A549 (cell line): ENCODE measurements at regions of chr3 and their contacts with region 1.

Region 1: GRCh38 chr3:25768851-25769250 is 14.4 kb downstream of the NGLY1 start:
- DNase-seq: no peak
- ATAC-seq: no peak
- H3K4me3 ChIP-seq: no peak overlapping the region
- H3K27ac ChIP-seq: no peak overlapping the region
- H3K4me1 ChIP-seq: no peaks in the 10 kb centered on the region
- CTCF ChIP-seq: no peak
- EP300 ChIP-seq: no peak
- POLR2A ChIP-seq: no peak
- RAD21 ChIP-seq: no peak

Region 2: DNA sequence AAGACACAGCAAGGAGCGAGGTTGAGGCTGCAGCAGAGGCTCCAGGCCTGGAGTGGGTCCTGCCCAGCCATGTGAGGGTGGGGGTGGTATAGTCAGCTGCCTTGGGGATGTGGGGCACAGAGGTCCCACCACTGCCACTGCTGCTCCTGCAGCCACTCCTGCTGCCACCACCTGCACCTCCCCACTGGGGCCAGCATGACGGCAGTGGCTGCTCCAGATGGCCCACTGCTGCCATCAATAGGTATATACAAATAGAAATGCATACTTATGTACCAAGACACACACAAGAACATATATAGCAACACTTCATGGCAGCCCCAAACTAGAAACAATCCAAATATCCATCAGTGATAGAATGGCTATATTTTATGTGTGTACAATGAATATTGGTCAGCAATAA is 94.2 kb before region 1 on chr3:
- CTCF ChIA-PET with region 1: no interaction called
- POLR2A ChIA-PET with region 1: no interaction called
- DNase-seq: no peak
- ATAC-seq: peak in 1 of 2 experiments; percentile 29; a peak in 2 of 6 replicates
- H3K4me3 ChIP-seq: no peak overlapping the region
- H3K27ac ChIP-seq: no peak overlapping the region
- H3K4me1 ChIP-seq: no peaks in the 10 kb centered on the region
- CTCF ChIP-seq: no peak
- EP300 ChIP-seq: no peak
- POLR2A ChIP-seq: no peak
- RAD21 ChIP-seq: no peak

Region 3: GRCh38 chr3:25713335-25713985 is 55.4 kb before region 1 on chr3:
- CTCF ChIA-PET with region 1: no interaction called
- POLR2A ChIA-PET with region 1: no interaction called
- DNase-seq: no peak
- ATAC-seq: no peak
- H3K4me3 ChIP-seq: no peak overlapping the region
- H3K27ac ChIP-seq: no peak overlapping the region
- H3K4me1 ChIP-seq: no peaks in the 10 kb centered on the region
- CTCF ChIP-seq: no peak
- EP300 ChIP-seq: no peak
- POLR2A ChIP-seq: no peak
- RAD21 ChIP-seq: no peak

Region 4: GRCh38 chr3:25782938-25783660 is 14.2 kb after region 1 on chr3 and contains the start of gene NGLY1:
- CTCF ChIA-PET with region 1: no interaction called
- POLR2A ChIA-PET with region 1: interaction called, 10 read pairs
- DNase-seq: peak; percentile 74 to 83
- ATAC-seq: peak; percentile 95 to 98
- H3K4me3 ChIP-seq: peak within 1 kb of the TSS; percentile 87
- H3K27ac ChIP-seq: peak within 1 kb of the TSS; percentile 93 to 100
- H3K4me1 ChIP-seq: peaks cover 15% of the 10 kb centered on the region; the same call in 2 of the 3 replicates
- CTCF ChIP-seq: no peak
- EP300 ChIP-seq: no peak
- POLR2A ChIP-seq: peak; percentile 96
- RAD21 ChIP-seq: no peak
- polyA plus RNA-seq, gene NGLY1: 29.2 and 46.3 TPM in 2 replicates